ENCODE measurements at regions of chr4 and their contacts with region 1.

Region 1: GRCh38 chr4:89434364-89434988 is 126.9 kb upstream of the GPRIN3 start:
- DNase-seq: no peak
- H3K4me3 Mint-ChIP-seq: no peak overlapping the region
- H3K27ac Mint-ChIP-seq: no peak overlapping the region
- H3K4me1 Mint-ChIP-seq: peaks cover 11% of the 10 kb centered on the region
- H3K27me3 Mint-ChIP-seq: peaks cover 2% of the 10 kb centered on the region

Region 2: GRCh38 chr4:89226665-89227574 is 207.6 kb before region 1 on chr4:
- CTCF ChIA-PET with region 1: interaction called, 73 read pairs
- POLR2A ChIA-PET with region 1: no interaction called
- DNase-seq: peak; percentile 81
- H3K4me3 Mint-ChIP-seq: no peak overlapping the region
- H3K27ac Mint-ChIP-seq: no peak overlapping the region
- H3K4me1 Mint-ChIP-seq: peaks cover 12% of the 10 kb centered on the region
- H3K27me3 Mint-ChIP-seq: no peaks in the 10 kb centered on the region

Region 3: DNA sequence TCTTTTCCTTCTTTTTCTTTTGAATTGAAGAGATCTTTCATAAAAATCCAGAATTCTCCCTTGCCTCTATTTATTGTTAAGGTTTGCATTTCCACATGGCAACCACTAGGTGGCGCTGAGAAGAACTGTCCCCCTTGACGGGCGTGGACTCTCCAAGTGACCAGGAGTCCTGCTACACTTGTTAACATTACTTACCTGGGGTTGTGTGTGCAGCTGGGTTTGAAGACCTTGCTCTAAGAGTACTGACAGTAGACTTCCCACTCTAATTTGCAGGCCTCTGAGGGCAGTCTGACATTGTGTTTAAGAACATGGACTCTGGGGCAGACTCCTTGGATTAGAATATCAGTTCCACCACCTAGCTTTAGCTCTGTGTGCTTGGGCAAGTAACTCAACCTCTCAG is 179.6 kb before region 1 on chr4:
- CTCF ChIA-PET with region 1: interaction called, 11 read pairs
- POLR2A ChIA-PET with region 1: interaction called, 3 read pairs
- DNase-seq: peak; percentile 50
- H3K4me3 Mint-ChIP-seq: no peak overlapping the region
- H3K27ac Mint-ChIP-seq: peak overlapping the region; percentile 52
- H3K4me1 Mint-ChIP-seq: peaks cover 75% of the 10 kb centered on the region
- H3K27me3 Mint-ChIP-seq: no peaks in the 10 kb centered on the region

Region 4: GRCh38 chr4:89316931-89317366 is 117.5 kb before region 1 on chr4:
- CTCF ChIA-PET with region 1: no interaction called
- POLR2A ChIA-PET with region 1: no interaction called
- DNase-seq: peak; percentile 39
- H3K4me3 Mint-ChIP-seq: peak overlapping the region; percentile 50
- H3K27ac Mint-ChIP-seq: peak overlapping the region; percentile 91
- H3K4me1 Mint-ChIP-seq: peaks cover 41% of the 10 kb centered on the region
- H3K27me3 Mint-ChIP-seq: no peaks in the 10 kb centered on the region

Measured in activated CD4-positive, alpha-beta memory T cell treated with anti-CD3 and anti-CD28 coated beads, Interleukin-2, amount 10 ng/mL, durations not matched to agents 7 days and 5 days (primary cell).